MCF 10A (cell line): ENCODE measurements at regions of chr2 and their contacts with region 1.

Region 1: GRCh38 chr2:7427293-7428060 is 510.3 kb downstream of the RNF144A start:
- DNase-seq: peak; percentile 70
- H3K4me3 Mint-ChIP-seq: no peak overlapping the region
- H3K27ac Mint-ChIP-seq: no peak overlapping the region
- H3K4me1 Mint-ChIP-seq: no peaks in the 10 kb centered on the region
- H3K27me3 Mint-ChIP-seq: peaks cover 31% of the 10 kb centered on the region
- CTCF ChIP-seq: peak; percentile 70

Region 2: DNA sequence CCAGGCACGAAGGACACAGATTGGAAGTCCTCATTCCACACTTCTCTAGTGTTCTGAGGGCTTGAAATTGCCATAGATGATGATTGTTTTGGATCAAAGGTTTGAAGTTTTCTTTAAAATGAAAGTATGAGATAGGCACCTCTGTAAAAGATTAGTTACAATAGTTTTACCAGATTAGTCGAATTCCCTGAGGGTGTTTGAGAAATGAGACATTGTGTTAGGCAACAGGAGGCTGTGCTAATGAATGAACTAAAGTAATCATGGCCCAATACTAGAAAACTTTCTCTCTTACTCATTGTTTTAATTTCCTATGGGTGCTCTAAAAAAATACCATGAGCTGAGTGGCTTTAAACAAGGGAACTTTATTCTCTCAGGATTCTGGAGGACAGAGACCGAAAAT is 88.5 kb before region 1 on chr2:
- CTCF ChIA-PET with region 1: no interaction called
- POLR2A ChIA-PET with region 1: no interaction called
- intact Hi-C with region 1: no loop called
- DNase-seq: peak; percentile 45
- H3K4me3 Mint-ChIP-seq: no peak overlapping the region
- H3K27ac Mint-ChIP-seq: no peak overlapping the region
- H3K4me1 Mint-ChIP-seq: no peaks in the 10 kb centered on the region
- H3K27me3 Mint-ChIP-seq: no peaks in the 10 kb centered on the region
- CTCF ChIP-seq: no peak

Region 3: GRCh38 chr2:7392076-7392787 is 35.2 kb before region 1 on chr2:
- CTCF ChIA-PET with region 1: no interaction called
- POLR2A ChIA-PET with region 1: no interaction called
- intact Hi-C with region 1: no loop called
- DNase-seq: peak; percentile 58
- H3K4me3 Mint-ChIP-seq: no peak overlapping the region
- H3K27ac Mint-ChIP-seq: no peak overlapping the region
- H3K4me1 Mint-ChIP-seq: no peaks in the 10 kb centered on the region
- H3K27me3 Mint-ChIP-seq: no peaks in the 10 kb centered on the region
- CTCF ChIP-seq: no peak

Region 4: DNA sequence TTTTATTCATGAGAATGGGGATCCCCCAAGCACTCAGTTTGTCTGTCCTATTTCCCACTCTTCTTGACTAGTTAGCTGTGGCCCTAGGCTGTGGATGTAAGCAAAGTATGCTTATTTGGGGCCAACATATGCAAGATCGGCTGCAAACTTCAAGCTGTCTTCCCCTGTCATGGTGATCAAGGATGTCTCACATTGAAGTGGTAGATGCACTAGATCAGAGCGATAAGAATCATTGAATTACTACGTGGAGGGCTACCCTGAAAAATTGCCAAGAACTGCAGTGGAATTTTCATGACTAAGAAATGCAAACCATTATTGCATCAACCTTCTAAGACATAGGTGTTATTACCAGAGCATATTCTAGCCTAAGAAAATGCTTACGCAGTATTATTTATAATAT is 17.1 kb after region 1 on chr2:
- CTCF ChIA-PET with region 1: interaction called, 16 read pairs
- POLR2A ChIA-PET with region 1: no interaction called
- intact Hi-C with region 1: no loop called
- DNase-seq: peak; percentile 5
- H3K4me3 Mint-ChIP-seq: no peak overlapping the region
- H3K27ac Mint-ChIP-seq: no peak overlapping the region
- H3K4me1 Mint-ChIP-seq: no peaks in the 10 kb centered on the region
- H3K27me3 Mint-ChIP-seq: no peaks in the 10 kb centered on the region
- CTCF ChIP-seq: no peak

Region 5: DNA sequence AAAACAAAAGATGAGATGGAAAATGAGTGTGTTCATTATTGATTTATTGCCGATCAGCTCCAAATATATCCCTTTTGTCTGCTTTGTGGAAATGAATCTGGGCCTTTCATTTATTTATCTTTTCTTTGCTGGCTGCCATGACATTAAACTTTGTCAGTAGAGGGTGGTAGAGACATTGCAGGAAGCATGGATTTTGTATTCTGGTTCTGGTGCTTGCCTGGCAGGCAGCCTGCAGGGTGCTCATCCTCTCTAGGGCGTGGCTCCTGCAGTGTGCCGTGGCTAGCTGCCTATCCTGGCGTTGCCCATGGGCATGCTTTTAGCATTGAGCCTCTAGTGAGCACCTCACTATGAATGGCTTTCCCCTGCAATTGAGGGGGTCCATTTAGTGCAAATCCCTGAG is 82.9 kb after region 1 on chr2:
- CTCF ChIA-PET with region 1: no interaction called
- POLR2A ChIA-PET with region 1: no interaction called
- intact Hi-C with region 1: no loop called
- DNase-seq: no peak
- H3K4me3 Mint-ChIP-seq: no peak overlapping the region
- H3K27ac Mint-ChIP-seq: no peak overlapping the region
- H3K4me1 Mint-ChIP-seq: no peaks in the 10 kb centered on the region
- H3K27me3 Mint-ChIP-seq: no peaks in the 10 kb centered on the region
- CTCF ChIP-seq: no peak

Region 6: GRCh38 chr2:7639476-7639875 is 212.0 kb after region 1 on chr2:
- CTCF ChIA-PET with region 1: no interaction called
- POLR2A ChIA-PET with region 1: no interaction called
- intact Hi-C with region 1: no loop called
- DNase-seq: no peak
- H3K4me3 Mint-ChIP-seq: no peak overlapping the region
- H3K27ac Mint-ChIP-seq: no peak overlapping the region
- H3K4me1 Mint-ChIP-seq: no peaks in the 10 kb centered on the region
- H3K27me3 Mint-ChIP-seq: no peaks in the 10 kb centered on the region
- CTCF ChIP-seq: no peak

Region 7: GRCh38 chr2:7672027-7672684 is 244.7 kb after region 1 on chr2:
- CTCF ChIA-PET with region 1: interaction called, 9 read pairs
- POLR2A ChIA-PET with region 1: no interaction called
- intact Hi-C with region 1: loop called (anchors 2 kb)
- DNase-seq: peak; percentile 66
- H3K4me3 Mint-ChIP-seq: no peak overlapping the region
- H3K27ac Mint-ChIP-seq: no peak overlapping the region
- H3K4me1 Mint-ChIP-seq: no peaks in the 10 kb centered on the region
- H3K27me3 Mint-ChIP-seq: no peaks in the 10 kb centered on the region
- CTCF ChIP-seq: peak; percentile 71